Panc1 (cell line): ENCODE measurements at regions of chr6 and their contacts with region 1.

Region 1: DNA sequence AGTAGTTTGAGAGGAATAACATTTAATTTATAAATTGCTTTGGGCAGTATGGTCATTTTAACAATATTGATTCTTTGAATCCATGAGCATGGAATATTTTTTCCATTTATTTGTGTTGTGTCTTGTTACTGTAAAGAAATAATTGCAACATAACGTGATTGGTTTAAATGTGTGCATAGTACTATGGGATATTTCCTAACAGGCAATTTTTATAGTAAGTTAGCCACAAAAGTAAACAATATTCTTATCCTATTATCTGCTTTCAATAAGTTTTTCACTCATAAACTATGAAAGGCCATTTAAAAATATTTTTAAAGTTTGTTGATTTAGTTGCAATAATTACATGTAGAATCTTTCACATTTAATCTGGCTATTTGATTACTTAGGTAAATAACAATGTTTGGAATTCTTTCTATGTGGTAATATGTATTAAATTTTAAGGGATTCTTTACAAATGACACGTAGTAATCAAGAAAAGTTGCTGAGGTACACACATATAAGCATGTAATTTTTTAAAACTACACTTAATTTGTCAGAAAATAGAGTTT is 885.7 kb downstream of the GRIK2 start:
- DNase-seq: no peak
- ATAC-seq: no peak
- H3K4me3 ChIP-seq: no peak overlapping the region
- H3K27ac ChIP-seq: no peak overlapping the region
- H3K4me1 ChIP-seq: no peaks in the 10 kb centered on the region
- H3K27me3 ChIP-seq: no peaks in the 10 kb centered on the region
- CTCF ChIP-seq: no peak

Region 2: GRCh38 chr6:103783331-103783730 is 1504.2 kb after region 1 on chr6:
- CTCF ChIA-PET with region 1: interaction called, 10 read pairs
- POLR2A ChIA-PET with region 1: no interaction called
- in situ Hi-C with region 1: no loop called
- intact Hi-C with region 1: no loop called
- DNase-seq: no peak
- ATAC-seq: no peak
- H3K4me3 ChIP-seq: no peak overlapping the region
- H3K27ac ChIP-seq: no peak overlapping the region
- H3K4me1 ChIP-seq: no peaks in the 10 kb centered on the region
- H3K27me3 ChIP-seq: no peaks in the 10 kb centered on the region
- CTCF ChIP-seq: no peak